Heart left ventricle (tissue), 16 donors: ENCODE measurements at regions of chr5 and their contacts with region 1.

Region 1: DNA sequence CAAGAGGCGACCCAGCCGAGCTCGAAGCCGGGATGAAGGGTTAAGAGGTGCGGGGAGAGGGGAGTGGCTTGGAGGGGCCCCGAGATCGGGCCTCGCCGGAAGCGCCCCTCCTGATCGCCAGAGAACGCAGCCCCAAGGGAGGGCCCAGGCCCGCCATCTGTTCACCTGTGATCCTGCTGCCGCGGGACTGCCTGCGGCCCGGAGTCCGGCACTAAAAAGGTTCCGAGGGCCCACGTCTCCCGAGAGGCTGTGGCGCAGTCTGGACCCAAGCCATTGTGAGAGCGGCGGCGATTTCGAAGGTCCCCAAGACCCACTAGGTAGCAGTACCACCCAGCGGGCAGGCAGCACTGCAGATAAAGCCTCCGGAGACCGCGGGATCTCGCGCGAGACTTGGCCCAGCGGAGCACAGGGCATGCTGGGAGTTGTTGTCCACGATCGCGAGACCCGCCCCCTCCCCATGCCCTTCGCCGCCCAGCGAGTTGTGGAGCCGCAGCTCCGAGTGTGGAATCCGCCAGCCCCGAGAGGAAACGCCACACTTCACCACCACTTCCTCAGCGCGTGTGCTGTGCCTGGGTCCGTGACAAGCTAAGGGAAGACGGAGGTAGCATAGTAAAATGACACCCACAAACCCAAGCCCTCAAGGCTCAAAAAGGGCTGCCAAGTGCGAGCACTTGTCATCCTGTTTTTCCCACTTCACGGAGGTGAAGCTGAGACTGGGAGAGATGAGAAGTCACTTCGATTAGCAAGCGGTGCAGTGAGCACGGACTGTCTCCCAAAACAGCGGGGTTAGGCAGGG is at the start of gene KIAA1191:
- DNase-seq: peak; percentile 95 to 98 (median 97)
- ATAC-seq: peak; percentile 96 to 99 (median 97)
- H3K4me3 ChIP-seq: peak within 1 kb of the TSS; percentile 57 to 100 (median 87)
- H3K27ac ChIP-seq: peak within 1 kb of the TSS; percentile 28 to 91 (median 85)
- H3K4me1 ChIP-seq: peaks cover 0 to 40% (median 21%) of the 10 kb centered on the region in 12 donors
- H3K27me3 ChIP-seq: no peaks in the 10 kb centered on the region
- CTCF ChIP-seq: peak in 6 of 12 donors; percentile 9 to 48 (median 36)
- POLR2A ChIP-seq: peak; percentile 31 to 95
- total RNA-seq, gene KIAA1191: 68.4 to 143 (median 104) TPM

Region 2: DNA sequence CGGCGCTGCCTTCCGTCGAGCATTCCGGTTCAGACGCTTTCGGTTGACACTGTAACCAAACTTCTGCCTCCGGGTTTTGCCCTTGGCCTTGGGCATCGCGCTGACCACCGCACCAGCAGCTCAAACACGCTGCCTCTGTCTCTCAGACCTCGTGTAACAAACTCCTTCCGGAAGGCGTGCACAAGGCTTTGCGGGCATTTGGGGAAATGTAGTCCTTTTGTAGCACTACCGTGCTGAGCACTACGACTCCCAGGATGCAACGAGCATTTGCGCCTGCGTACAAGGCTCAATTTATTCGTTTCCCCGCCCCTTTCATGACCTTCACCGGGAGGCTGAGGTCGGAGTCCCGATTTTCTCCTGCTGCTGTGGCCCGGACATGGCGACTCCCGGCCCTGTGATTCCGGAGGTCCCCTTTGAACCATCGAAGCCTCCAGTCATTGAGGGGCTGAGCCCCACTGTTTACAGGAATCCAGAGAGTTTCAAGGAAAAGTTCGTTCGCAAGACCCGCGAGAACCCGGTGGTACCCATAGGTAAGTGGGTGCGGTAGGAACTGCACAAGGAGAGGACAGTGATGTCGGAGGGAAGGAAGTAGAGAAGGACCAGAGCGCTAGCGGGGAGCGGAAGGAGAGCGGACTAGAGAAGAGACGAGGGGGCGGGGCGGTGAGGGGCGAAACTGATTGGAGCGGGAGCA is 27.0 kb after region 1 on chr5 and contains the starts of genes HIGD2A and NOP16:
- intact Hi-C with region 1: loop called in 3 of 10 experiments (anchors 1 to 2 kb)
- DNase-seq: peak; percentile 98 to 100 (median 100)
- ATAC-seq: peak; percentile 94 to 97 (median 96)
- H3K4me3 ChIP-seq: peak within 1 kb of the TSS; percentile 53 to 89 (median 82)
- H3K27ac ChIP-seq: peak within 1 kb of the TSS; percentile 85 to 100 (median 96)
- H3K4me1 ChIP-seq: peaks cover 3 to 30% (median 22%) of the 10 kb centered on the region in 12 donors
- H3K27me3 ChIP-seq: no peaks in the 10 kb centered on the region
- CTCF ChIP-seq: no peak
- POLR2A ChIP-seq: peak in 1 of 2 donors; percentile 36
- total RNA-seq, gene HIGD2A: 177 to 318 (median 218) TPM
- total RNA-seq, gene NOP16: 9.3 to 33.9 (median 15.8) TPM

Region 3: GRCh38 chr5:176396330-176396729 is 34.7 kb after region 1 on chr5:
- intact Hi-C with region 1: loop called in 1 of 10 experiments (anchors 5 kb)
- DNase-seq: peak in 1 of 5 donors; percentile 10
- ATAC-seq: no peak
- H3K4me3 ChIP-seq: no peak overlapping the region
- H3K27ac ChIP-seq: peak overlapping the region in 7 of 12 donors; percentile 17 to 79 (median 50)
- H3K4me1 ChIP-seq: peaks cover 0 to 33% (median 9%) of the 10 kb centered on the region in 12 donors
- H3K27me3 ChIP-seq: no peaks in the 10 kb centered on the region
- CTCF ChIP-seq: no peak
- POLR2A ChIP-seq: no peak

Region 4: GRCh38 chr5:176415952-176416924 is 54.6 kb after region 1 on chr5 and contains the start of gene CLTB:
- intact Hi-C with region 1: loop called in 3 of 10 experiments (anchors 2 to 5 kb)
- DNase-seq: peak; percentile 92 to 97 (median 94)
- ATAC-seq: peak; percentile 90 to 94 (median 93)
- H3K4me3 ChIP-seq: peak within 1 kb of the TSS; percentile 47 to 100 (median 84)
- H3K27ac ChIP-seq: peak within 1 kb of the TSS; percentile 83 to 99 (median 96)
- H3K4me1 ChIP-seq: peaks cover 8 to 52% (median 42%) of the 10 kb centered on the region in 12 donors
- H3K27me3 ChIP-seq: no peaks in the 10 kb centered on the region
- CTCF ChIP-seq: peak; percentile 43 to 92 (median 83)
- POLR2A ChIP-seq: peak; percentile 85 to 93
- total RNA-seq, gene CLTB: 185 to 401 (median 231) TPM

Region 5: DNA sequence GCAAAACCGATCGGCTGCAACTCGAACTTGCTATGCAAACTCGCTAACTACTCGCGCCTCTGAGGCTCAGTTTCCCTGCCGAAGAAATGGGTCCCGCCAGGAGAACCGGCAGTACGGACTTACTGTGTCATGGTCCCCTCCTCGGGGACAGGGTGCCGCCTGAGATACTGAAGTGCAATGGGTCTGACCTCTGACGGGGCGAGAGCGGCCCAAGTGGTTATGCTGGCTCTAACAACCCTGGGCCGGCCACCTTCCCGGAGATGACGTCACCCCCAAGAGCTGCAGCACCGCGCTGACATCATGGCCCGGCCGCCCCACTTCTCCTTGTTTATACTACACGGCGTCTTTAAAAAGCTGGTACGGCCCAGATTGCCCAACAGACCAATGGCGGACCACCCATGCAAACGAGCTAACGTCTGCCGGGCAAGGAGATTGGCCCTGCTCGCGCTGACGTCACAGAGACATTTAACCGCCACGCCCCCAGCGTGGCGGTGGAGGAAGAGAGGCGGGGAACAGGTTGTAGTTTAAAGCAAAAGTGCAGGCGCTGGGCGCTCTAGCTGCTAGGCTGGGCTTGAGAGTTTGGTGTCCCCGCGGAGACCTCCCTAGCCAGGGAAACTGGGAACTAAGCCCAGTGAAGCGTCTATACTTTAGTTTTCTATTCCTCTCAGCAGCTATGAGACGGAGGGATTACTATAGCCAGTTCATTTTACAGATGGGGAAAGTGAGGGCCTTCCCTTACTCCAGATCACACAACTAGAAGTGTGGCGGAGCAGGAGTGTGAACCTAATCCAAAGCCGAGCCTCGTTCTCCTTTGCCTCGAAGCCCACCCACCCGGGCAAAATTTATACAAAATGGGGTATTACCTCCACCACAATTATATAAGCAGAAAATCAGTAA is 176.2 kb after region 1 on chr5:
- intact Hi-C with region 1: loop called in 1 of 10 experiments (anchors 10 kb)
- DNase-seq: peak; percentile 99
- ATAC-seq: peak; percentile 89 to 93 (median 90)
- H3K4me3 ChIP-seq: peak overlapping the region; percentile 56 to 98 (median 88)
- H3K27ac ChIP-seq: peak overlapping the region; percentile 92 to 100 (median 96)
- H3K4me1 ChIP-seq: peaks cover 15 to 77% (median 57%) of the 10 kb centered on the region in 12 donors
- H3K27me3 ChIP-seq: no peaks in the 10 kb centered on the region
- CTCF ChIP-seq: no peak
- POLR2A ChIP-seq: peak in 1 of 2 donors; percentile 39

Region 6: GRCh38 chr5:176647030-176647866 is 285.6 kb after region 1 on chr5 and contains the start of gene TSPAN17:
- intact Hi-C with region 1: loop called in 1 of 10 experiments (anchors 10 kb)
- DNase-seq: peak; percentile 100
- ATAC-seq: peak; percentile 98 to 100 (median 98)
- H3K4me3 ChIP-seq: peak within 1 kb of the TSS; percentile 43 to 96 (median 84)
- H3K27ac ChIP-seq: peak within 1 kb of the TSS in 11 of 12 donors; percentile 54 to 88 (median 84)
- H3K4me1 ChIP-seq: peaks cover 0 to 32% (median 14%) of the 10 kb centered on the region in 12 donors
- H3K27me3 ChIP-seq: no peaks in the 10 kb centered on the region
- CTCF ChIP-seq: peak in 8 of 12 donors; percentile 26 to 63 (median 40)
- POLR2A ChIP-seq: peak; percentile 29 to 83
- total RNA-seq, gene TSPAN17: 22.2 to 53.1 (median 30.9) TPM